Left colon (tissue), 2 donors: ENCODE measurements at regions of chr2 and their contacts with region 1.

Region 1: GRCh38 chr2:209431701-209432100 is 7.9 kb downstream of the MAP2 start:
- DNase-seq: no peak
- ATAC-seq: no peak

Region 2: DNA sequence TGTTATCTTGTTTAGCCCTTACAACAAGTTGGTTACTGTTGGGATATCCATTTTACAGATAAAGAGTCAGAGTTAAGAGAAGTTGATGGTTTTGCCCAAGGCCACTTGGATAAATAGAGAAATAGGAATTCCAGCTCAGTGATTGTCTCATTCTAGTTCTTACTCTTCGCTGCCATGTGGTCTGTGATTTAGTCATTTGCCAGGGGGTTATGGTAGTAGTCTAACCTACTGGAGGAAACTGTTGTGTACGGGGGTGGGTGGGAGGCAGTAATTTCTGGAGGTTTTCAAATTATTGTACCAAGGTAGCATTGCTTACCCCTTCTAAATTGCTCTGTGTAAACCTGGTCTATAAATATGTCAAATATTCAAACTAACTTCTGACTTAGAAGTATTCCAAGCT is 102.5 kb after region 1 on chr2:
- intact Hi-C with region 1: loop called in 1 of 2 experiments (anchors 10 kb)
- DNase-seq: no peak
- ATAC-seq: no peak